Head of caudate nucleus (tissue), 42 donors: ENCODE measurements at regions of chr1 and their contacts with region 1.

Region 1: DNA sequence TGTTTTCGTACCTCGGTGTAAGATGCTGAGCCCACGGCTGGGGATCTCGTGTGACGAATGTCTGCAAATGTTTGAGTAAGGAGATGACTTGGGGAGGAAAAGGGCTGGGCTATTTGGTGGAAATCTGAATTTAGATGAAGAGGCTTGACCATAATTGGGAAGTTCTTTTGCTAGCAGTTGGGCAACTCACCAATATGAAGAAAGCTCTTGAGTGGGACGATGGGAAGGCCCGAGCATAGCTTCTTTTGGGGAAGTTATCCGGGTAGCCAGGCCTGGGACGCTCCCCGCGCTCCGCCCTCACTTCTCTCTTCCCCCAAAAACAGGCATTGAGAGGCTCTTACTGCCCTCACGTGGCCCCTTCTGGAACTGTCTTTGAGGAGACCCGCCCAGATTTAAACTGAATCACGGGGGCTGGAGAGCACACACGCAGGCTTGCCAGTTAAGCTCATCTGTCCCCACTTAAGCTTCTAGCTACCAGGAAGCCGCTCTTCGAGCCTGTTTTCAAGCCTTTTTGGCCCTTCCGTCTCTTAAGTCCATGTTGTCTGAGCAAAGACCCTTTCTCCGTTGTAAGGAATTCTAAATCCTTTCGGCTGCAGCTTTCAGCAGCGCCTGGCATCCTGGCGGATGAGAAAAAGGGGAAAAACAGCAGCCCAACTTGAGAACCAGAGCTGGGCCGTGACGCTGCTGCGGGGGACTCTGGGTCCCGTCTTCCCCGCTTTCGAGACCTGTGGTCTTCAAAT is 93.1 kb downstream of the NID1 start:
- DNase-seq: peak; percentile 77 to 95 (median 88)

Region 2: GRCh38 chr1:235866913-235867845 is 104.6 kb before region 1 on chr1:
- intact Hi-C with region 1: loop called (anchors 5 kb)
- DNase-seq: peak; percentile 91 to 99 (median 97)